Naive thymus-derived CD4-positive, alpha-beta T cell (primary cell): ENCODE measurements at regions of chr1 and their contacts with region 1.

Region 1: GRCh38 chr1:64539781-64540218 is 69.9 kb downstream of the CACHD1 start:
- DNase-seq: no peak
- ATAC-seq: no peak
- H3K4me3 ChIP-seq: no peak overlapping the region
- H3K4me3 Mint-ChIP-seq: peak overlapping the region in 8 of 10 donors; percentile 55 to 84 (median 70)
- H3K27ac ChIP-seq: peak overlapping the region; percentile 4
- H3K27ac Mint-ChIP-seq: peak overlapping the region in 8 of 9 donors; percentile 74 to 95 (median 92)
- H3K4me1 ChIP-seq: peaks cover 0 to 48% of the 10 kb centered on the region in 2 donors
- H3K4me1 Mint-ChIP-seq: peaks cover 30 to 98% (median 65%) of the 10 kb centered on the region in 7 donors
- H3K27me3 ChIP-seq: no peaks in the 10 kb centered on the region
- H3K27me3 Mint-ChIP-seq: peaks cover 0 to 5% (median 0%) of the 10 kb centered on the region in 5 donors

Region 2: GRCh38 chr1:64212031-64212430 is 327.8 kb before region 1 on chr1:
- CTCF ChIA-PET with region 1: no interaction called
- POLR2A ChIA-PET with region 1: no interaction called
- intact Hi-C with region 1: no loop called
- DNase-seq: no peak
- ATAC-seq: no peak
- H3K4me3 ChIP-seq: no peak overlapping the region
- H3K4me3 Mint-ChIP-seq: no peak overlapping the region
- H3K27ac ChIP-seq: no peak overlapping the region
- H3K27ac Mint-ChIP-seq: no peak overlapping the region
- H3K4me1 ChIP-seq: no peaks in the 10 kb centered on the region
- H3K4me1 Mint-ChIP-seq: no peaks in the 10 kb centered on the region
- H3K27me3 ChIP-seq: no peaks in the 10 kb centered on the region
- H3K27me3 Mint-ChIP-seq: peaks cover 0 to 17% (median 10%) of the 10 kb centered on the region in 5 donors

Region 3: GRCh38 chr1:64320470-64320869 is 219.3 kb before region 1 on chr1:
- CTCF ChIA-PET with region 1: no interaction called
- POLR2A ChIA-PET with region 1: no interaction called
- intact Hi-C with region 1: no loop called
- DNase-seq: no peak
- ATAC-seq: peak; percentile 55
- H3K4me3 ChIP-seq: no peak overlapping the region
- H3K4me3 Mint-ChIP-seq: no peak overlapping the region
- H3K27ac ChIP-seq: no peak overlapping the region
- H3K27ac Mint-ChIP-seq: no peak overlapping the region
- H3K4me1 ChIP-seq: no peaks in the 10 kb centered on the region
- H3K4me1 Mint-ChIP-seq: peaks cover 0 to 4% (median 0%) of the 10 kb centered on the region in 7 donors
- H3K27me3 ChIP-seq: no peaks in the 10 kb centered on the region
- H3K27me3 Mint-ChIP-seq: peaks cover 0 to 9% (median 5%) of the 10 kb centered on the region in 5 donors

Region 4: DNA sequence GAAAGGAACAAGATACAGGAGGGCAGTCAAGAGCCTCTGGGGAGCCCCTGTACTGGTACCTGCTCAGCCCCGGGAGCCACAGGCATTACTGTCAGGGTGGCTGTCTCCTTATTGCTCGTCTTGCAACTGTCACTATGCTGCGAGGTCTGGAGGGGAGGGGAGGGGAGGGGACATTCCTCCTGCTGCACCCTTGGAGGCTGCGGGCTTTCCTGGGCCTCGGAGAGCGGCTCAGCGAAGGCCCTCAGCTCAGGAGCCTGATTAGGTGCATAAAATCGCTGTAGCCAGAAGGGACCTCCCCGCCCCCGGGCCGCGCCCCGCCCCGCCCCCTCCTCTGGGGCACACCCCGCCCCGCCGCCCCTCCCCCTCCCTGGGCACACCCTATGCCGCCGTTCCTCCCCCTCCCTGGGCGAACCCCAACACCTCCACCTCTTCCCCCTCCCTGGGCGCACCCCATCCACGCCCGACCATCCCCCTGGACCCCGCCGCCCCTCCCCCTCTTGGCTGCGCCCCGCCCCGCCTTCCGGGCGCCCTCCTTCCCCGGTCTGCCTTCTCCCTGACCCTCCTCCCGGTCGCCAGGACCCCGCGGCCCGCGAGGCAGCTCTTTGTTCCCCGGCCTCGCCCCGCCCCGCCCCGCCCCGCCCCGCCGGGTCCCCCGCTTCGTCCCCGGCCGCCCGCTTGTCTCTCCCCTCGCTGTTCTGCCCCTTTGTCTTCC is 34.4 kb before region 1 on chr1:
- CTCF ChIA-PET with region 1: no interaction called
- POLR2A ChIA-PET with region 1: interaction called, 8 read pairs
- intact Hi-C with region 1: loop called (anchors 1 to 5 kb)
- DNase-seq: peak; percentile 18 to 65 (median 44)
- ATAC-seq: peak; percentile 83
- H3K4me3 ChIP-seq: peak overlapping the region; percentile 43
- H3K4me3 Mint-ChIP-seq: peak overlapping the region; percentile 69 to 93 (median 90)
- H3K27ac ChIP-seq: peak overlapping the region; percentile 62
- H3K27ac Mint-ChIP-seq: peak overlapping the region in 8 of 9 donors; percentile 57 to 92 (median 85)
- H3K4me1 ChIP-seq: peaks cover 0 to 7% of the 10 kb centered on the region in 2 donors
- H3K4me1 Mint-ChIP-seq: peaks cover 4 to 88% (median 42%) of the 10 kb centered on the region in 7 donors
- H3K27me3 ChIP-seq: no peaks in the 10 kb centered on the region
- H3K27me3 Mint-ChIP-seq: peaks cover 0 to 32% (median 3%) of the 10 kb centered on the region in 5 donors

Region 5: DNA sequence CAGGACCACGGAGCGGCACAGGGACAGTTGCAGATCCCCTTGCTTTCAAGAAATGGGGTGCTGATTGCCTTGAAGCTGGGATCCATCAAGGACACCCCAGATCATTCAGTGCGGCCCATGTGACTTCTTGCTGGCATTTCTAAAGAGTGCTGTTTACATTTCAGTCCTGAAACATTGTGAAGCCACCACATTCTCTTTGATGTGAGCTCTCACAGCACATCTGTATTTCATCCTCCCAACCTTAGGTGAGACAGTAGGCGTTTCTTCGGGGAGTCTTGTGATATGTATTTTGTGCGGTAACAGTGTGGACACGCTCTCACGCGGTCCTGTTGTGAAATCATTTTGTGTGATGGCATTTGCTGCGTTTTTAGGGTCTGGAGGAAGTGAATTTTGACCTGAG is 12.6 kb before region 1 on chr1:
- CTCF ChIA-PET with region 1: interaction called, 3 read pairs
- POLR2A ChIA-PET with region 1: interaction called, 4 read pairs
- intact Hi-C with region 1: loop called in 1 of 2 experiments (anchors 1 kb)
- DNase-seq: peak in 6 of 9 donors; percentile 29 to 56 (median 36)
- ATAC-seq: peak; percentile 67
- H3K4me3 ChIP-seq: no peak overlapping the region
- H3K4me3 Mint-ChIP-seq: peak overlapping the region in 9 of 10 donors; percentile 3 to 78 (median 55)
- H3K27ac ChIP-seq: no peak overlapping the region
- H3K27ac Mint-ChIP-seq: peak overlapping the region in 6 of 9 donors; percentile 2 to 78 (median 22)
- H3K4me1 ChIP-seq: peaks cover 0 to 6% of the 10 kb centered on the region in 2 donors
- H3K4me1 Mint-ChIP-seq: peaks cover 0 to 81% (median 43%) of the 10 kb centered on the region in 7 donors
- H3K27me3 ChIP-seq: no peaks in the 10 kb centered on the region
- H3K27me3 Mint-ChIP-seq: peaks cover 0 to 7% (median 0%) of the 10 kb centered on the region in 5 donors

Region 6: GRCh38 chr1:64553281-64553680 is 13.5 kb after region 1 on chr1:
- CTCF ChIA-PET with region 1: interaction called, 3 read pairs
- POLR2A ChIA-PET with region 1: interaction called, 9 read pairs
- intact Hi-C with region 1: loop called in 1 of 2 experiments (anchors 1 kb)
- DNase-seq: peak in 2 of 9 donors; percentile 12 to 16
- ATAC-seq: no peak
- H3K4me3 ChIP-seq: no peak overlapping the region
- H3K4me3 Mint-ChIP-seq: peak overlapping the region in 3 of 10 donors; percentile 6 to 18 (median 18)
- H3K27ac ChIP-seq: no peak overlapping the region
- H3K27ac Mint-ChIP-seq: peak overlapping the region in 7 of 9 donors; percentile 4 to 91 (median 70)
- H3K4me1 ChIP-seq: peaks cover 0 to 25% of the 10 kb centered on the region in 2 donors
- H3K4me1 Mint-ChIP-seq: peaks cover 20 to 81% (median 57%) of the 10 kb centered on the region in 7 donors
- H3K27me3 ChIP-seq: no peaks in the 10 kb centered on the region
- H3K27me3 Mint-ChIP-seq: peaks cover 0 to 57% (median 0%) of the 10 kb centered on the region in 5 donors

Region 7: DNA sequence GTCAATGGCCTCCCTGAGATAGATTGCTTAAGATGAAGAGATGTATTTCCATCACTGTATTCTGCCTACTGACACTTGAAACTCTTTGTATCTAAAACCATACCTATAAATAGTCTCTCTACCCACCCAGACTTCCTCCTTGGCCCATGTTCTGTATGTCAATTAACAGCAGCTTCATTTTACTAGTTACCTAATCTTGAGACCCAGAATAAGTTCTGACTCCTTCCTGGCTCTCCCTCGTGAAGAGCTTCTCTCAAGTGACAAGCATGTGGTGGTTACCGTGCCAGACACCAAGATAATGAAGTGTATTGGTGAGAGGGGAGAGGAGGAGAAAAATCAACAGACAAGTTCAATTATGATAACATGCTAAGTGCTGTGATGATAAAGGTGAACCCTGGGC is 76.2 kb after region 1 on chr1:
- CTCF ChIA-PET with region 1: no interaction called
- POLR2A ChIA-PET with region 1: no interaction called
- intact Hi-C with region 1: no loop called
- DNase-seq: no peak
- ATAC-seq: no peak
- H3K4me3 ChIP-seq: no peak overlapping the region
- H3K4me3 Mint-ChIP-seq: peak overlapping the region in 4 of 10 donors; percentile 3 to 33 (median 20)
- H3K27ac ChIP-seq: no peak overlapping the region
- H3K27ac Mint-ChIP-seq: peak overlapping the region in 4 of 9 donors; percentile 2 to 40 (median 19)
- H3K4me1 ChIP-seq: no peaks in the 10 kb centered on the region
- H3K4me1 Mint-ChIP-seq: peaks cover 2 to 36% (median 21%) of the 10 kb centered on the region in 7 donors
- H3K27me3 ChIP-seq: no peaks in the 10 kb centered on the region
- H3K27me3 Mint-ChIP-seq: peaks cover 0 to 10% (median 0%) of the 10 kb centered on the region in 5 donors

Region 8: GRCh38 chr1:64744492-64745180 is 204.8 kb after region 1 on chr1 and contains the start of gene RAVER2:
- CTCF ChIA-PET with region 1: no interaction called
- POLR2A ChIA-PET with region 1: interaction called, 3 read pairs
- intact Hi-C with region 1: loop called in 1 of 2 experiments (anchors 10 kb)
- DNase-seq: peak; percentile 41 to 60 (median 48)
- ATAC-seq: peak; percentile 84
- H3K4me3 ChIP-seq: peak within 1 kb of the TSS; percentile 55
- H3K4me3 Mint-ChIP-seq: peak within 1 kb of the TSS; percentile 80 to 98 (median 90)
- H3K27ac ChIP-seq: peak within 1 kb of the TSS; percentile 10
- H3K27ac Mint-ChIP-seq: peak within 1 kb of the TSS in 8 of 9 donors; percentile 28 to 93 (median 82)
- H3K4me1 ChIP-seq: peaks cover 5% of the 10 kb centered on the region in 2 donors
- H3K4me1 Mint-ChIP-seq: peaks cover 11 to 26% (median 16%) of the 10 kb centered on the region in 7 donors
- H3K27me3 ChIP-seq: no peaks in the 10 kb centered on the region
- H3K27me3 Mint-ChIP-seq: peaks cover 0 to 51% (median 6%) of the 10 kb centered on the region in 5 donors
- total RNA-seq, gene RAVER2: 0.29 to 1.9 (median 1.2) TPM